Lower leg skin (tissue), 4 donors: ENCODE measurements at regions of chr4 and their contacts with region 1.

Region 1: GRCh38 chr4:146333187-146333894 is 119.0 kb downstream of the REELD1 start:
- DNase-seq: no peak
- H3K4me3 ChIP-seq: no peak overlapping the region
- CTCF ChIP-seq: no peak
- POLR2A ChIP-seq: no peak

Region 2: GRCh38 chr4:146302822-146303221 is 30.5 kb before region 1 on chr4:
- intact Hi-C with region 1: loop called (anchors 1 kb)
- DNase-seq: no peak
- H3K4me3 ChIP-seq: no peak overlapping the region
- CTCF ChIP-seq: no peak
- POLR2A ChIP-seq: no peak